ENCODE measurements at regions of chr6 and their contacts with region 1.

Region 1: DNA sequence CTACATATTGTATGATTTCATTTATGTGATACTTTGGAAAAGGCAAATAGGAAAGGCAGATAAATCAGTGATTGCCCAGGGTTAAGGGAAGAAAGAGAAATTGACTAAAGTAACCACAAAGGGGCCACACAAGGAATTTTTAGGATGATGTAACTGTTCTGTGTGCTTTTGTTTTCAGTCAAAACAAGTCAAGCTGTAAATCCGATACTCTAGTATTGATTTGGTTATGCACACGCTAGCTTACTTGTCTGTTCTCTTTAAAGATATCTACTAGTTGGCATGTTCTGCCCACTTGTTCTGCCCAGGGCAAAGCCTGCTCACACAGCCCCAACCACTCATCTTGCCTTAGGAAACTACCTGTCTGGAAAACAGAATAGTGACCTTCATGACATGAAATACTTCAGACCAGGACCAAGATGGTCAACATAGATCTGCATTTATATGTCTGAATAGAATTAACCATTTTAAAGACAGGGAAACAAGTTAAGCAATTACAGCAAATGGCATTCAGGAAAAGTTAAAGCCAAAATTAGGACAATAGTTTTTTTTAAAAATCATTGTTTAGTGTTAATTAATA is 6.3 kb downstream of the FBXL4 start:
- DNase-seq: no peak
- H3K4me3 ChIP-seq: no peak overlapping the region
- H3K27ac ChIP-seq: no peak overlapping the region
- H3K4me1 ChIP-seq: peaks cover 18% of the 10 kb centered on the region
- H3K27me3 ChIP-seq: no peaks in the 10 kb centered on the region
- CTCF ChIP-seq: no peak

Region 2: GRCh38 chr6:98927534-98927933 is 13.9 kb before region 1 on chr6:
- CTCF ChIA-PET with region 1: no interaction called
- POLR2A ChIA-PET with region 1: no interaction called
- intact Hi-C with region 1: no loop called
- DNase-seq: no peak
- H3K4me3 ChIP-seq: no peak overlapping the region
- H3K27ac ChIP-seq: no peak overlapping the region
- H3K4me1 ChIP-seq: no peaks in the 10 kb centered on the region
- H3K27me3 ChIP-seq: no peaks in the 10 kb centered on the region
- CTCF ChIP-seq: no peak

Region 3: GRCh38 chr6:98957446-98957845 is 16.0 kb after region 1 on chr6:
- CTCF ChIA-PET with region 1: no interaction called
- POLR2A ChIA-PET with region 1: interaction called, 10 read pairs
- intact Hi-C with region 1: no loop called
- DNase-seq: peak; percentile 53 to 80
- H3K4me3 ChIP-seq: no peak overlapping the region
- H3K27ac ChIP-seq: no peak overlapping the region
- H3K4me1 ChIP-seq: peaks cover 8% of the 10 kb centered on the region
- H3K27me3 ChIP-seq: 0 out of 2 replicates have a peak, but pooled peaks cover 4% of the 10 kb centered on the region
- CTCF ChIP-seq: no peak